Psoas muscle (tissue), 8 donors: ENCODE measurements at regions of chr10 and their contacts with region 1.

Region 1: DNA sequence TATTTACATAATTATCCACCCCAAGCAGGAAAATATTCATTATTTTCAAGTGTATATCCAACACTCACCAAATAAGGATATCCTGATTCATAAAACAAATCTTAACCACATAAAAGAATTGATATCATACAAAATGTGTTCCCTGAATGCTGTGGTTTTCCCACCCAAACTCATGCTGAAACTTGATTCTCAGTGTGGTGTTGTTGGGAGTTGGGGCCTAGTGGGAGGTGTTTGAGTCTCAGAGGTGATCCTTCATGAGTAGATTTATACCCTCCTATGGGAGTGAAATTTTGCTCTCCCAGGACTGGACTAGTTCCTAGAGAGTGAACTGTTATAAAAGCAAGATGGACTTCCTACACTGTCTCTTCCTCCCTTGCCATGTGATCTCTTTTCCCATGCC is 1028.3 kb downstream of the SORCS1 start:
- DNase-seq: no peak
- ATAC-seq: no peak
- H3K4me3 ChIP-seq: no peak overlapping the region
- H3K27ac ChIP-seq: no peak overlapping the region
- H3K4me1 ChIP-seq: no peaks in the 10 kb centered on the region
- H3K27me3 ChIP-seq: no peaks in the 10 kb centered on the region
- CTCF ChIP-seq: no peak

Region 2: GRCh38 chr10:104707602-104708459 is 1428.3 kb before region 1 on chr10:
- intact Hi-C with region 1: no loop called
- DNase-seq: no peak
- ATAC-seq: no peak
- H3K4me3 ChIP-seq: no peak overlapping the region
- H3K27ac ChIP-seq: no peak overlapping the region
- H3K4me1 ChIP-seq: no peaks in the 10 kb centered on the region
- H3K27me3 ChIP-seq: peaks cover 0 to 3% (median 0%) of the 10 kb centered on the region in 3 donors
- CTCF ChIP-seq: no peak

Region 3: GRCh38 chr10:106224676-106225075 is 88.5 kb after region 1 on chr10:
- intact Hi-C with region 1: loop called in 1 of 2 experiments (anchors 5 kb)
- DNase-seq: no peak
- ATAC-seq: no peak
- H3K4me3 ChIP-seq: no peak overlapping the region
- H3K27ac ChIP-seq: no peak overlapping the region
- H3K4me1 ChIP-seq: no peaks in the 10 kb centered on the region
- H3K27me3 ChIP-seq: no peaks in the 10 kb centered on the region
- CTCF ChIP-seq: no peak